Ascending aorta (tissue), 2 donors: ENCODE measurements at regions of chr20 and their contacts with region 1.

Region 1: GRCh38 chr20:63973636-63974402 is 4.1 kb upstream of the ZNF512B start:
- DNase-seq: peak in 1 of 2 donors; percentile 90
- H3K4me3 ChIP-seq: peak overlapping the region; percentile 48 to 52
- H3K27ac ChIP-seq: no peak overlapping the region
- H3K4me1 ChIP-seq: peaks cover 9 to 11% of the 10 kb centered on the region in 2 donors
- H3K27me3 ChIP-seq: no peaks in the 10 kb centered on the region
- CTCF ChIP-seq: peak; percentile 95 to 100 (median 98)

Region 2: DNA sequence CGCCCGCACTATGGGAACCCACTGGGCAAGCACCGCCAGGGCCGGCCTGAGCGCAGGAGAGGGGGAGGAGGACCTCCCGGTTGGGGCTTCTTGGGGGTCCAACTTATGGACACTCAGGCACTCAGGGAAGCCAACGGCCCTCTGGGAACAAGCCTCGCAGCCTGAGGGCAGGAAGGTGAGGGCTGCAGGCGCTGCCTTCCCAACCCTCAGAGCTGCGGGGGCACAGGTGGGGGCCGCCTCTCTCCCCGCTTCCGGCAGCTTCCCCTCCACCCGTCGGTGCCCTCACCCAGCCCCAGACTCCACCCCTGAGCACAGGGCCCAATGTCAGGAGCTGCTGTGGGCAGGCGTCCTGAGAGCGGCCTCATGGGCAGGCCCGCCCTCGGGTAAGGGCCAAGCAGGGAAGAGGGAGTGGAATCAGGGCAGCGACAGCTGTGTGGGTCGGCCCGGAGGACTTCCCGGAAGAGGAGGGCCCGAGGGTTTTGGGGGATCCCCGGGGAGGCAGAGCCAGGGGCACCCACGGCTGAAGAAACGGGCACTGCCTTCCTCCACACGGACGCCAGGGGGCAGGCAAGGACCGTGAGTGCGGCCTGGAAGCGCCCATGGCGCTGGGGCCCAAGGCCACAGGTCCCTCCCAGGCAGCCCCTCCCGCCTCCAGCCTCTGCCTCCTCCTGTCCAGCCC is 436.2 kb before region 1 on chr20:
- intact Hi-C with region 1: loop called (anchors 1 kb)
- DNase-seq: peak; percentile 66 to 90
- H3K4me3 ChIP-seq: peak overlapping the region; percentile 5 to 32
- H3K27ac ChIP-seq: no peak overlapping the region
- H3K4me1 ChIP-seq: peaks cover 0 to 2% of the 10 kb centered on the region in 2 donors
- H3K27me3 ChIP-seq: peaks cover 8% of the 10 kb centered on the region
- CTCF ChIP-seq: peak; percentile 93 to 94 (median 94)

Region 3: GRCh38 chr20:63686492-63687321 is 287.1 kb before region 1 on chr20:
- intact Hi-C with region 1: no loop called
- DNase-seq: peak; percentile 51 to 86
- H3K4me3 ChIP-seq: no peak overlapping the region
- H3K27ac ChIP-seq: peak overlapping the region; percentile 66 to 87
- H3K4me1 ChIP-seq: peaks cover 9 to 28% of the 10 kb centered on the region in 2 donors
- H3K27me3 ChIP-seq: no peaks in the 10 kb centered on the region
- CTCF ChIP-seq: no peak

Region 4: GRCh38 chr20:63785691-63786131 is 188.1 kb before region 1 on chr20:
- intact Hi-C with region 1: loop called (anchors 2 kb)
- DNase-seq: no peak
- H3K4me3 ChIP-seq: no peak overlapping the region
- H3K27ac ChIP-seq: no peak overlapping the region
- H3K4me1 ChIP-seq: no peaks in the 10 kb centered on the region
- H3K27me3 ChIP-seq: no peaks in the 10 kb centered on the region
- CTCF ChIP-seq: no peak

Region 5: GRCh38 chr20:63908008-63908624 is 65.7 kb before region 1 on chr20:
- intact Hi-C with region 1: loop called (anchors 5 kb)
- DNase-seq: no peak
- H3K4me3 ChIP-seq: no peak overlapping the region
- H3K27ac ChIP-seq: no peak overlapping the region
- H3K4me1 ChIP-seq: peaks cover 0 to 6% of the 10 kb centered on the region in 2 donors
- H3K27me3 ChIP-seq: no peaks in the 10 kb centered on the region
- CTCF ChIP-seq: no peak

Region 6: GRCh38 chr20:63942250-63942959 is 31.4 kb before region 1 on chr20:
- intact Hi-C with region 1: no loop called
- DNase-seq: no peak
- H3K4me3 ChIP-seq: no peak overlapping the region
- H3K27ac ChIP-seq: peak overlapping the region; percentile 1 to 53
- H3K4me1 ChIP-seq: peaks cover 0 to 2% of the 10 kb centered on the region in 2 donors
- H3K27me3 ChIP-seq: no peaks in the 10 kb centered on the region
- CTCF ChIP-seq: no peak